MCF 10A (cell line): ENCODE measurements at regions of chr7 and their contacts with region 1.

Region 1: GRCh38 chr7:94276795-94277194 is 117.9 kb upstream of the COL1A2 start:
- DNase-seq: peak; percentile 56
- H3K4me3 Mint-ChIP-seq: no peak overlapping the region
- H3K27ac Mint-ChIP-seq: no peak overlapping the region
- H3K4me1 Mint-ChIP-seq: no peaks in the 10 kb centered on the region
- H3K27me3 Mint-ChIP-seq: no peaks in the 10 kb centered on the region
- CTCF ChIP-seq: peak; percentile 49

Region 2: DNA sequence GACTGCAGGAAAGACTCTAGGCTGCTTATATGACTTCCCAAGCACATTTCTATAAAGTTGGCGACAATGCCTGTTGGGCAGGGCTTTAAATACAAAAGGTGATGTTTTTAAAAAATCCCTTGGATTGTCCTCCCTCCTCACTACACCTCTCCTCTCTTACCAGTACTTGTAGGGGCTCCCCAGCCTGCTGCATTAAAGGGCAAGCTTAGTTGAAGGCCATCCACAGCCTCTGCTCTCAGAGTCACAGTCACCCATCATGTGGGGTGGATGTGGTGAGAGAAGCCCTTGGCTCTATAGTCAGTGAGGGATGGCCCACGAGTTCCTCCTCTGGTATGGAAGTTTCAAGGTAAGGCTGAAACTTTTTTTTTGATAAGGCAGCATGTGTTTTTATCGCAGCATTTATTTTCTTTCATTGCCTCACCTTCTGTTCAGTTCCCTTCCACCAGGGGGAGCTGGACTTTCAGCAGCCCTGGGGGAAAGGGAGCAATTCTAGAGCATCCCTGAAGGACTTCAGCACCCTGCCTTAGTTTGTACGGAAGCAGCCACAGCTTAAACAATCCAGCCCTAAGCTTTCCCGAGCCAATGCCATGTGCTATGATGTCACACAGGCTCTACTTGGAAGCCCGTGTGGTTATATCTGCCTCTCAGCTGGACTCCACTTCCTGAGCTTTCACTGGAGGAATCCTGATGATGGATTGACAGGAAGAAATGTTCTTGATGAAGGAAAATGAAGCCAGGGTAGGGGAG is 834.1 kb before region 1 on chr7:
- CTCF ChIA-PET with region 1: no interaction called
- POLR2A ChIA-PET with region 1: no interaction called
- intact Hi-C with region 1: loop called (anchors 10 kb)
- DNase-seq: peak; percentile 58
- H3K4me3 Mint-ChIP-seq: no peak overlapping the region
- H3K27ac Mint-ChIP-seq: no peak overlapping the region
- H3K4me1 Mint-ChIP-seq: no peaks in the 10 kb centered on the region
- H3K27me3 Mint-ChIP-seq: peaks cover 91% of the 10 kb centered on the region
- CTCF ChIP-seq: peak; percentile 66

Region 3: DNA sequence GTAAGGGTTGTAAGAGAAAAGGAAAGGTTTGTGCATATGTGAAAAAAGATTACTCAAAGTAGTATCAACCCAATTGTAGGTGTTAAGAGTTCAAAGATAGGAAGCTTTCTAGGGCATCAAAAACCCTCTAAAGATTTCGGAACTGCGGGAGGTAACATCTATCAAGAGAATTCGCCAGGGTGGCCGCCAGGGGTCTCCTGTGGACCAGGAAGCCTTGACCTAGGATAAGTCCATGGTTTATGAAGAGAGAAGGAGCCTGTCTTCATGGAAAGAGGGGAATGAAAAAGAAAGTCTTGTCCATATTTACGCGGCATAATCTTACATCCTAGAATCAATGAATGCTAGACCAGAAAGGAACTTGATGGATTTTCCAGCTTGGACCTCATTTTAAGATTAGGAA is 561.6 kb before region 1 on chr7:
- CTCF ChIA-PET with region 1: interaction called, 4 read pairs
- POLR2A ChIA-PET with region 1: no interaction called
- intact Hi-C with region 1: loop called (anchors 2 kb)
- DNase-seq: peak; percentile 54
- H3K4me3 Mint-ChIP-seq: no peak overlapping the region
- H3K27ac Mint-ChIP-seq: no peak overlapping the region
- H3K4me1 Mint-ChIP-seq: peaks cover 18% of the 10 kb centered on the region
- H3K27me3 Mint-ChIP-seq: peaks cover 74% of the 10 kb centered on the region
- CTCF ChIP-seq: peak; percentile 48

Region 4: DNA sequence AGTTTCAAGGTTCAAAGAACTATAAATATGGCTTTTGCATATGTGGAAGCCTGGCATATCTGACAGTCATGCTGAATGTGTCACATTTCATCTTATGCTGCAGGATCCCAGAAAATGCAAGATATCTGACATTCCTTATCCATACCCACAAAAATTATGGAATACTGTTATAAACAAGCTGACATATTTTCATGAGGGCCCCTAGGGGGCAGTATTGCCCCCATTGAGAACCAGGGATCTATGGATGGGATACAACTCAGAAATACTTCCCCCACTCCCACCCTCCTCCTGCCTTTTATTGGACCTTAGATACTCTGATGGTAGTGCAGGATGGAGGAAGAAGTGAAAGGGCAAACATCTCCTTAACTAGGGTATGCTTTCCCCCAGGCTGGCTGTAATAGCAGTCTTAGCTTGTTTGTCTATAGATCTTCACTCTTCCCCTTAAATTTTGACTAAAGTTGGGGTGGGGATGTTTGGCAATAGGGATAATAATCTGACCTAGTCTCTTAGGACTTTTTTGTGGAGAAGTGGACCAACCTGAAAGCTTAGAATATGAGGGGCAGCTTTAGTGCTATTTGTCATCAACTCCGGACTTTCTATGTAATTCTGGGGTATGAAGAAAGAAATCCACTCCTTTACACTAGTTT is 373.9 kb before region 1 on chr7:
- CTCF ChIA-PET with region 1: interaction called, 4 read pairs
- POLR2A ChIA-PET with region 1: interaction called, 3 read pairs
- intact Hi-C with region 1: loop called (anchors 2 kb)
- DNase-seq: peak; percentile 68
- H3K4me3 Mint-ChIP-seq: no peak overlapping the region
- H3K27ac Mint-ChIP-seq: no peak overlapping the region
- H3K4me1 Mint-ChIP-seq: no peaks in the 10 kb centered on the region
- H3K27me3 Mint-ChIP-seq: no peaks in the 10 kb centered on the region
- CTCF ChIP-seq: peak; percentile 80

Region 5: DNA sequence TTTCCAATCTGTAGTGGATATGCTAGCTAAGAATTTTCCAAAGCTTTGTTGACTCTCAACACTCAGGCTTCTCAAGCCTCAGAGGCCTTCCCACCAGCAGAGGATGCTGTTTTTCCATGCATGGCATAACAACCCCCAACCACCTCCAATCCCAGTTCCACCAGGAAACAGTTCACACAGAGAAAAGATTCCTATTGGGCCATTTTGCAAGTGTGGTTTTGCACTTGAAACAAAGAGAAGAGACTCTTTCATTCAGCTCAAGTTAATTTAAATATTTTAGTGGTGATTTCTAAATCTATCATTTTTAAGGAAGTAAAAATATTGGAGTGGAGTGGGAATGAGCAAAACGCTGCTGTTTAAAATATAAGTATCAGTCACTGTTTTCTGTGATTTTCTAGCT is 12.3 kb after region 1 on chr7:
- CTCF ChIA-PET with region 1: interaction called, 11 read pairs
- POLR2A ChIA-PET with region 1: no interaction called
- intact Hi-C with region 1: no loop called
- DNase-seq: peak; percentile 81
- H3K4me3 Mint-ChIP-seq: no peak overlapping the region
- H3K27ac Mint-ChIP-seq: no peak overlapping the region
- H3K4me1 Mint-ChIP-seq: no peaks in the 10 kb centered on the region
- H3K27me3 Mint-ChIP-seq: no peaks in the 10 kb centered on the region
- CTCF ChIP-seq: peak; percentile 74

Region 6: GRCh38 chr7:94426980-94427875 is 150.4 kb after region 1 on chr7:
- CTCF ChIA-PET with region 1: no interaction called
- POLR2A ChIA-PET with region 1: no interaction called
- intact Hi-C with region 1: no loop called
- DNase-seq: no peak
- H3K4me3 Mint-ChIP-seq: no peak overlapping the region
- H3K27ac Mint-ChIP-seq: no peak overlapping the region
- H3K4me1 Mint-ChIP-seq: peaks cover 8% of the 10 kb centered on the region
- H3K27me3 Mint-ChIP-seq: no peaks in the 10 kb centered on the region
- CTCF ChIP-seq: no peak

Region 7: GRCh38 chr7:94509879-94510581 is 233.2 kb after region 1 on chr7:
- CTCF ChIA-PET with region 1: no interaction called
- POLR2A ChIA-PET with region 1: no interaction called
- intact Hi-C with region 1: no loop called
- DNase-seq: peak; percentile 65
- H3K4me3 Mint-ChIP-seq: peak overlapping the region; percentile 69
- H3K27ac Mint-ChIP-seq: peak overlapping the region; percentile 43
- H3K4me1 Mint-ChIP-seq: peaks cover 32% of the 10 kb centered on the region
- H3K27me3 Mint-ChIP-seq: no peaks in the 10 kb centered on the region
- CTCF ChIP-seq: no peak